ENCODE measurements at regions of chr1 and their contacts with region 1.

Region 1: DNA sequence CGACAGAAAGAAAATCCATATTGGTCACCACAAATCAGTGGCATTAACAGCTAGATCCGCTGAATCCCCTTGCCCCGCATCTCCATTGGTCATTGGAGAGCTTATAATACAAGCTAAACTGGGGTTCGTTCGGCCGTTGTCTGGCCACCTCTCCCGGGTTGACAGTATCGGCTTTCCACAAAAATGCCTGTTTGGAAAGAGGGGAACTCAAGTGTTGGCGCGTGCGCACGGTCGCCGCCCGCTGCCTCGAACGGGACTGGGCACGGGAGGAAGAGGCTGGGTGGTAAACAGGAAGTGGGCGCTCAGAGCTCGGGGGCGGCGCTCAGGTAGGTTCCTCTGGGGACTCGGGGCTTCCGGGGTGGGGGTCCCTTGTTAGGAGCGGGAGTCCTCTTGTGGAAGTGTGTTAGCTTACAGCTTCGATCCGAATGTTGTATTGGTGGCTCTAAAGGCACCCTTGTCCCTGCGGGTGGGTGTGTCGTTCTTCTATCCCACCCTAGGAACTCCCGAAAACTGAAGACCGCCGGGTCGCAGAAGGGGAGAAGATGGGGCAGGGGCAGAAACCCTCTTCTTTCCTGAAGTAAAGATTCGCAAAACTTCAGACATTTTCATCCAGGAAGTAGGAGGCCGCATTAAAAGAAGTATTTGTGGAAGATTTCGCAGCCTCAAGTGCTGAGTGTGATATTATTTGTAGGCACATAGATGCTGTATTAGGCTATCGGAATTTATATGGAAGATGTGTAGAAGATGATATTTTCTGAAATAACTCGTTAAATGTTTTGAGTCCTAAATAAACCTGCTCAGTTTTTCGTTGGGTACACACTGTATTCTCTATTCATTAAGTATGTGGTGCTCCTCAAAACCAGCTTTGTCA is 962 bp downstream of the BROX start:
- DNase-seq: peak; percentile 86 to 97 (median 92)

Region 2: DNA sequence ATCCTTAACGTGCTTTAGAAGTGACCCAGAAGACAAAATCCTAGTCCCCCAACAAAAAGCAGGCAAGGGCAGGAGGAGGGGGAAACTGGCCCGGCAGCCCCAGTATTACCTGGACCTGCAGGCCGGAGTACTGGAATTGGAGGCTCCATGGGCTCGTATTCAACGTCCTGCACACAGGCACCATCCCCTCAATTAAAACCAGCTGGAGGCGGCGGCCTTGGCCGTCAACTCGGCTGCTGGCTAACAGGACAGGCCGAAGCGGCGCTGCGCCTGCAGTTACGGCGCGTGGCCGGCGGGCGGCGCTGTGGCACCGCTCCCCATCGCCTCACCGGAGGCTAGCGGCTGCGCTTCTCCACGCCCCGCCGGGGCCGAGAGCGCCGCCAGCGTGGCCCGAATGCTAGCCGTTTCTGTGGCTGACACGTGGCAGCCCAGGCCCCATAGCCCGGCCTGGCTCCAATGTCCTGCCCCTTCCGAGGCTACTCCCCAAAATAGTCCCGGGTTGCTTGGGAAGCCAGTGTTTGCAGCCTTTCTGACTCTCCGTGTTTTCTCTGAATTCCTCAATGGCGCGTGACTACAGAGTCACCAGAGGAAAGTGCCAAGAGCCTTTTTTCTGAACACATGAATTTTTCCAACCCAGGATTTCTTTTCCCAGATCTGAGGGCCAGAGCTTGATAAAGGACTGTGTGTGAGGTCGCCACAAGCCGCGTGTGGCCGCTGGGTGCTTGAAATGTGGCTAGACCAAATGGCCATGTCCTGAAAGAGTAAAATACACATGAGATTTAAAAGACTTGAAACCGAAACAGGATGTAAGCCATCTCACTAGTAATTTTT is 247.9 kb before region 1 on chr1:
- intact Hi-C with region 1: loop called (anchors 10 kb)
- DNase-seq: peak; percentile 73 to 95 (median 88)

Region 3: DNA sequence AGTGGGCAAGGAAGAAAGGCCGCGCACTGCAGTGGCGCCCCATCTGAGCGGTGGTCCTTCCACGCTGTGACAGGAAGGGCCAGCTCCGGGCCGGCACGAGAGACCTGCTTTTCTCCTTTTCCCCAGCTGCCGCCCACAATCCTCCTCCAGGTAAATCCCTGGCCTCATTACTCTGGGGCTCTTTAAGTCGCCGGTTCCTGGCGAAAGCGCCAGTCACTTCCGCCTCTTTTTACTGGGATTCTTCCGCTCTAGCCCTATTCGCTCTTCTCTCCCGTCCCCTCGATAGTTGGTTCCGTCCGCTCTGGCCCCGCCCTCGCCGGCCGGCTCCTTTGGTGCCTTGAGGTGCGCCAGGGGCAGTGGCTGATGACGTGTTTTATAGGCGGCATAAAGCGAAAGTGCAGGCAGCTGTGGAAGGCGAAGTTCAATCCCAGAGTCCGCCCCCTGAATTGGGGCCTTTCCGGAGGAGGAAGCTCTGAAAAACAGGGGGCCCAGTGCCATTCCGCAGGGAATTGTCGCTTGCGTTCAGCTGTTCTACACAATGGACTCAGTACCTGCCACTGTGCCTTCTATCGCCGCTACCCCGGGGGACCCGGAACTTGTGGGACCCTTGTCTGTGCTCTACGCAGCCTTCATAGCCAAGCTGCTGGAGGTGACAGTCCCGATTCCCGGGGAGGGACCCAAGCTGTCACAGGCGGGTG is 69.2 kb before region 1 on chr1:
- intact Hi-C with region 1: loop called (anchors 10 kb)
- DNase-seq: peak; percentile 90 to 98 (median 96)

Measured in head of caudate nucleus (tissue), 42 donors.